Aorta (tissue), 5 donors: ENCODE measurements at regions of chr4 and their contacts with region 1.

Region 1: DNA sequence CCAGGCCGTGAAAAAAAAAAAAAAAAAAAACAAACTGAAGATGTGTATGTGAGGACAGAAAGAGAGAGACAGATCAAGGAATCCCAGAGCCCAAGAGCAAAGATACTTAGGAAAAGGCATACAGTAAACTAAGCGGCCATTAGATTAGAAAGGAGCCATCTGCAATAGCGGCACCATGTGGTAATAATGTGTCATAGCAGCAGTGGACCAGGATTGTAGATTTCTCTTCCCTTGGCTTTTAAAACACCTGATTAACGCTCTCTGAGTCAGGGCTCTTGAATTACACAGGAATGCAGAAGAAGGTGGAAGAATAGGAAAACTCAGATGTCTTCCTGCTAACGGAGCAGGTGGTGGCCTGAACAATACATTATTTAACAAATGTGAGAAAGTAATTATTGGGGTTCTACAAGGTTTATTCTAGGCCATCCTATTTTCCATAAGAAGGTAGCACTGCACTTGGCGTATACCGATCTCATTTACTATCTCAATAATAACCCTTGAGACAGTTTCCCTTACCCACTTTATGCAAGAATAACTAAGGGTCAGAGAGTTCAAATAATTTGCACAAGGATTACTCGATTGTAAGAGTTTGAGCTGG is 182.7 kb downstream of the KCNIP4 start:
- DNase-seq: no peak
- ATAC-seq: peak; percentile 63
- H3K4me3 ChIP-seq: no peak overlapping the region
- H3K27ac ChIP-seq: no peak overlapping the region
- H3K4me1 ChIP-seq: no peaks in the 10 kb centered on the region
- H3K27me3 ChIP-seq: no peaks in the 10 kb centered on the region

Region 2: DNA sequence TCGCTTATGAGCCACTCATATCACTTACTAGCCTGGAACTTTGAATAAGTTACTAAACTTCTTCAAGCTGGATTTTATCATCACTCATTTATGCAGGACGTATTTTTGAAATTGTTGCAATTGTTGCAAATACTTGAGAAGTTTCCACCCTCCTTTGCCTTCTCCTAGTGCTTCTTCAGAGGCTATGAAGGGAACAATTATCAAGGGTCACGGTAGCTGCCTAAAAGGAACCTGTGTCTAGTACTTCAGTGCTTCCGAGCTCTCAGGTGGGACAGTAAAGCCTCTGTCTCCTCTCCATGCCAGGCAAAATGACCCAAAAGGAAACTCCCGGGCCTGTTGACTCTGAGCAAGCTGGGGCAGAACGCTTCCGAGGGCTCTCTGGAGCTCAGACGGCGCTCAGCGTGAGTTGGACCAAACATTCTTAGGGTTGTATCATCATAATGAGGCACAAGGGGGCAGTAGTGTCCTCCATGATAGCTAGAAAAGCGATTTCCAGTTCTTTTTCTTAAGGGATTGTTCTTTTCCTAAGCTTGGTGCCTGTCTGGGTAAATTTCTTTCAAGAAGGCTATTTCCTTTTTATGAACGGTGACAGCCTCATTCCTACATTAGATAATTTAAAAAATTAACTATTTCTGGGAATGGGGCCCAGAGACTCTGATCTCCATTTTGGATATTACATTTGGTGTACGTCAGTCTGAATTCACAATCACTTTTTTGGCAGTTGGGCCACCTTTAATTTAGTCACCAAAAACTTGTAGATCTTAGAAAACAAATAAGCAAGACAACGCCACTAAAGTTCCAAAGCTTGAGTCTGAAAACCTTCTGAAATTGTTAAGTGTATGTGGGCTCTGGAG is 992.5 kb before region 1 on chr4:
- intact Hi-C with region 1: loop called in 1 of 2 experiments (anchors 10 kb)
- DNase-seq: no peak
- ATAC-seq: peak; percentile 70
- H3K4me3 ChIP-seq: no peak overlapping the region
- H3K27ac ChIP-seq: no peak overlapping the region
- H3K4me1 ChIP-seq: no peaks in the 10 kb centered on the region
- H3K27me3 ChIP-seq: no peaks in the 10 kb centered on the region

Region 3: GRCh38 chr4:21512353-21512752 is 253.6 kb before region 1 on chr4:
- intact Hi-C with region 1: loop called (anchors 2 kb)
- DNase-seq: no peak
- ATAC-seq: no peak
- H3K4me3 ChIP-seq: no peak overlapping the region
- H3K27ac ChIP-seq: no peak overlapping the region
- H3K4me1 ChIP-seq: no peaks in the 10 kb centered on the region
- H3K27me3 ChIP-seq: no peaks in the 10 kb centered on the region

Region 4: GRCh38 chr4:21628116-21628670 is 137.7 kb before region 1 on chr4:
- intact Hi-C with region 1: no loop called
- DNase-seq: no peak
- ATAC-seq: no peak
- H3K4me3 ChIP-seq: no peak overlapping the region
- H3K27ac ChIP-seq: no peak overlapping the region
- H3K4me1 ChIP-seq: no peaks in the 10 kb centered on the region
- H3K27me3 ChIP-seq: no peaks in the 10 kb centered on the region

Region 5: DNA sequence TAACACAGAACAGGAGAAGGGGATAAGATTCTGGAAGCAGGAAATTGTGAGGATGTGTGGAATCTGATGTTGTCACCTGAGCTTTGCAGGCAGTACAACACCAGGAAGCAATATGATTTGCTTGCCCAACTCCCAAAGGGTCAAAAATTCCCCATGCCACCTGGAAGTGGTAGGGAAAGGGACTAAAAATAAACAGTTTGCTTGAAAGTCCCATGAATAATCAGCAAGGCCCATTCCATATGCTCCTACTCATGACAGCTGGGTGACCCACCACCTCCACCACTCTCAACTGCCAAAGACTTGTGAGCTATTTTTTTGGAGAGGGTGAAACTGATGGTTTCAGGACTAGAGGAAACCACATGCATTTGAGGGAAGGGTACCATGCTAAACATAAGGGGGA is 14.2 kb after region 1 on chr4:
- intact Hi-C with region 1: no loop called
- DNase-seq: no peak
- ATAC-seq: no peak
- H3K4me3 ChIP-seq: no peak overlapping the region
- H3K27ac ChIP-seq: no peak overlapping the region
- H3K4me1 ChIP-seq: no peaks in the 10 kb centered on the region
- H3K27me3 ChIP-seq: no peaks in the 10 kb centered on the region